ENCODE measurements at regions of chr1 and their contacts with region 1.

Region 1: DNA sequence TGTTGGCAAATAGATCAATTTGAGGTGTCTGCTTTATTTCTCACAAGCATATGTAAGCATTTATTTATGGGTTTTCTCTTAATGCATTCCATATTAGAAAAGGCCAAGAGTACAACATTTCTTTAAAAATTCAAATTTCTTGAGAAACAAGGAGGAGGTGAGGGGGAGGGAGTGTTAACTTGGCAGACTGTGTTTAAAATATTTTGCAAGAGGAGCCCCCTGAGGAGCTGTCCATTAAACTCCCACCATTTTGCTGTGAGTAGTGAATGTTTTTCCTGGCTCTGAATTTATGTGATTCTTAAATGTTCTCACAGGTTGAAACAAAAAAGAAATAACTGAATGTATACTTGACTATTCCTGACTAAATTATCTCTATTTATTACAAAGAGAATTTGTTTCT is 363.8 kb downstream of the PTPRC start:
- DNase-seq: no peak
- H3K4me3 ChIP-seq: no peak overlapping the region
- H3K27ac ChIP-seq: no peak overlapping the region
- H3K4me1 ChIP-seq: no peaks in the 10 kb centered on the region
- H3K27me3 ChIP-seq: no peaks in the 10 kb centered on the region
- CTCF ChIP-seq: no peak
- POLR2A ChIP-seq: no peak

Region 2: DNA sequence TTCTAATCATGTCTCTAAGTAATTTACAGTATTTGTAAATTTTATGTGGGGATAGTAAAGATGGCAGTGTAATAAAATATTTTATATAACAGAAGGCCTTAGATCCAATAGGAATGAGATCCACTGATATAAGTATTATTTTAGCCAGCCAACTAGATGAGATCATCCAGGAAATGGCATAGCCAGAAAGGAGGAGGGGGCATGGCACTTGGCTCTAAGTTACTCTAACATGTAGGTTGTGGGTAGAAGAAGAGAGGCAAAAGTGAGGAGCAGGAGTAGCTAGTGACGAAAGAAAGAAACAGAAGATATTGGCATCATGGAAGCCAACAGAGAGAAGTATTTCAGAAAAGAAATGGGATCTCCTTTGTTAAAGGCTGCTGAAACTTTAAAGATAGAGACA is 62.3 kb after region 1 on chr1:
- CTCF ChIA-PET with region 1: no interaction called
- POLR2A ChIA-PET with region 1: no interaction called
- dilution Hi-C with region 1: no loop called
- intact Hi-C with region 1: loop called (anchors 5 kb)
- DNase-seq: peak; percentile 42
- H3K4me3 ChIP-seq: no peak overlapping the region
- H3K27ac ChIP-seq: no peak overlapping the region
- H3K4me1 ChIP-seq: peaks cover 7% of the 10 kb centered on the region
- H3K27me3 ChIP-seq: no peaks in the 10 kb centered on the region
- CTCF ChIP-seq: no peak
- POLR2A ChIP-seq: no peak

Measured in endothelial cell of umbilical vein (primary cell).